Gastrocnemius medialis (tissue), 4 donors: ENCODE measurements at regions of chr9 and their contacts with region 1.

Region 1: GRCh38 chr9:10443868-10444204 is 169.0 kb downstream of the PTPRD start:
- DNase-seq: no peak
- ATAC-seq: no peak
- H3K4me3 ChIP-seq: no peak overlapping the region
- H3K27ac ChIP-seq: no peak overlapping the region
- H3K4me1 ChIP-seq: no peaks in the 10 kb centered on the region
- H3K27me3 ChIP-seq: no peaks in the 10 kb centered on the region
- CTCF ChIP-seq: no peak
- POLR2A ChIP-seq: no peak

Region 2: GRCh38 chr9:10354591-10354990 is 89.2 kb before region 1 on chr9:
- in situ Hi-C with region 1: no loop called
- intact Hi-C with region 1: no loop called
- DNase-seq: no peak
- ATAC-seq: no peak
- H3K4me3 ChIP-seq: no peak overlapping the region
- H3K27ac ChIP-seq: no peak overlapping the region
- H3K4me1 ChIP-seq: no peaks in the 10 kb centered on the region
- H3K27me3 ChIP-seq: no peaks in the 10 kb centered on the region
- CTCF ChIP-seq: no peak
- POLR2A ChIP-seq: no peak

Region 3: DNA sequence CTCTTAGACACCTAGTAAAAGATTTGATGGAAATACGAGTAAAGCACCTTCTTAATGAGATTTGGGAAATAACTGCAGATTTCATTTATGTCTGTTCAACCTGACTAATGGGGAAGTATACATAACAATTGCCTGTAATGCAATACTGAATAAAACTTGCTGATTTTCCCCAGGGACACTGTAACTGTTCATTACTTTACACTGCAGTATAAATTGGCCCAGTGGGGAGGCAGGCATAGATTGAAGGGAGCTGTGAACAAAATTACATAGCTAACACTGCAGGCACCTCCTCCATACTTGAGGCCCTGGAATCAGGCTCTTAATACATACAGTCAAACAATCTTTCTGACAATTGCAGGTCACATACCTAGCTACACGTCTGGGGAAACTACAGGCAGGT is 47.2 kb before region 1 on chr9:
- in situ Hi-C with region 1: loop called in 1 of 4 experiments (anchors 10 kb)
- intact Hi-C with region 1: no loop called
- DNase-seq: no peak
- ATAC-seq: no peak
- H3K4me3 ChIP-seq: no peak overlapping the region
- H3K27ac ChIP-seq: no peak overlapping the region
- H3K4me1 ChIP-seq: no peaks in the 10 kb centered on the region
- H3K27me3 ChIP-seq: no peaks in the 10 kb centered on the region
- CTCF ChIP-seq: no peak
- POLR2A ChIP-seq: no peak